Endothelial cell of umbilical vein (primary cell): ENCODE measurements at regions of chr14 and their contacts with region 1.

Region 1: DNA sequence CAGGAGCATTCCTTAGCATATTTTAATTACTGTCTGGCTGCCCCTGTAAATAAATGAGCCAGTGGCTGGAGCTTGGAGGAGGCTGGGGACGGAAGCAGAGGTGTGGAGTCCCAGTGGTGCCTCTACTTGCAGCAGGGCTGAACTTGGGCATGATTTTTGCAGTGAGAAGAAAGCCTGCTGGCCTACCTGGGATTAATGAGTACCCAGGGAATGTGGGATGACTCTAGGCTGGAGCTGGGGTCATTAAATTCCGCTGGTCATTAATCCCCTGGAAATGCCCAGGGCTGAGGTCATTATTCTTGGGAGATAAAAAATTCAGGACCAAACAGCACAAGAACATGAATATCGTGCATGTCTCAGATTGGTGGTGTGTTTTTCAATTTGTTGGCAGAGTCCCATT is 753.3 kb downstream of the VRK1 start:
- DNase-seq: no peak
- H3K4me3 ChIP-seq: no peak overlapping the region
- H3K27ac ChIP-seq: no peak overlapping the region
- H3K4me1 ChIP-seq: no peaks in the 10 kb centered on the region
- H3K27me3 ChIP-seq: no peaks in the 10 kb centered on the region
- CTCF ChIP-seq: no peak
- POLR2A ChIP-seq: no peak

Region 2: DNA sequence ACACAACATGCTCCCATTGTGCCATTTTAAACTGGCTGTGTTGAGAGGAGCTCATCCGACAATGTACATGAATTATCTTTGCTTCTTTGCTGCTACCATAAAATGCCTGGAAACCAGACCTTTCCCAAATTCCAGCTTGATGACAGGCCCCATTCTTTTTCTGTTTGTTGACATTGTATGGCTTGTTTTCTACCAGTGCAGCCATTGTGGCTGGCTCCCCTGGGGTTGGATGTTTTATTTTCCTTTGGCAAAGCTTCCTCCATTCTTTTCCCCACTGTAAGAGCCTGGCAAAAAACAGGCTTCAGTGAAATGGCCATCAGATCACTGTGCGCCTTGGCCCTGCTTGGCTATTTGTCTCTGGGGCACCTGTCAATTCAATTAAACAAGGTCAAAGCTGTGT is 220.8 kb before region 1 on chr14:
- CTCF ChIA-PET with region 1: no interaction called
- POLR2A ChIA-PET with region 1: no interaction called
- dilution Hi-C with region 1: no loop called
- intact Hi-C with region 1: no loop called
- DNase-seq: no peak
- H3K4me3 ChIP-seq: no peak overlapping the region
- H3K27ac ChIP-seq: no peak overlapping the region
- H3K4me1 ChIP-seq: no peaks in the 10 kb centered on the region
- H3K27me3 ChIP-seq: no peaks in the 10 kb centered on the region
- CTCF ChIP-seq: no peak
- POLR2A ChIP-seq: no peak

Region 3: DNA sequence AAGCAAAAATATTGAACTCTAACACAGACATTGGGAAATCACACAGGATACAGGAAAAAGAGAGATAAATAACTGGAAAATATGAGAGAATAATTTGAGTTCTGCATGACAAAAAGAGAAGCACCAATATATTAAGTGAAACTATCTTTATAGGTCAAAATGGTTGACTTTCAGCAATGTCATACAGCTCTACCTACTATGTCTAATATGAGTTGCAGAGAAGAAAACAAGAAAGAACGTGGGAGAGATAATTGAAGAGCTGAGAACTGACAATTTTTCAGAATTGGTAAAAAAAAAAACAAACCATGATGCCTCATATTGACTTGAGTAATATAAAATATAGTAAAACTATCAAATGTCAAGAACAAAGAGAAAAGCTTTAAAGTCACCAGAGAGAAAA is 1499.8 kb after region 1 on chr14:
- CTCF ChIA-PET with region 1: no interaction called
- POLR2A ChIA-PET with region 1: no interaction called
- dilution Hi-C with region 1: no loop called
- intact Hi-C with region 1: loop called (anchors 5 kb)
- DNase-seq: no peak
- H3K4me3 ChIP-seq: no peak overlapping the region
- H3K27ac ChIP-seq: no peak overlapping the region
- H3K4me1 ChIP-seq: no peaks in the 10 kb centered on the region
- H3K27me3 ChIP-seq: no peaks in the 10 kb centered on the region
- CTCF ChIP-seq: no peak
- POLR2A ChIP-seq: no peak